ENCODE measurements at regions of chr16 and their contacts with region 1.

Region 1: GRCh38 chr16:4124535-4125294 is 8.5 kb upstream of the ADCY9 start:
- DNase-seq: no peak
- ATAC-seq: no peak

Region 2: GRCh38 chr16:3654249-3654991 is 470.3 kb before region 1 on chr16 and contains the start of gene DNASE1:
- intact Hi-C with region 1: no loop called
- DNase-seq: peak; percentile 55
- ATAC-seq: peak; percentile 50 to 69
- total RNA-seq, gene DNASE1: 3.0 to 5.8 TPM

Region 3: GRCh38 chr16:4053301-4053845 is 71.3 kb before region 1 on chr16:
- intact Hi-C with region 1: no loop called
- DNase-seq: peak; percentile 70
- ATAC-seq: peak; percentile 78 to 79

Region 4: GRCh38 chr16:4176612-4177417 is 52.1 kb after region 1 on chr16:
- intact Hi-C with region 1: loop called in 1 of 2 experiments (anchors 5 kb)
- DNase-seq: no peak
- ATAC-seq: peak in 1 of 2 donors; percentile 28